HepG2 (cell line): ENCODE measurements at regions of chr11 and their contacts with region 1.

Region 1: DNA sequence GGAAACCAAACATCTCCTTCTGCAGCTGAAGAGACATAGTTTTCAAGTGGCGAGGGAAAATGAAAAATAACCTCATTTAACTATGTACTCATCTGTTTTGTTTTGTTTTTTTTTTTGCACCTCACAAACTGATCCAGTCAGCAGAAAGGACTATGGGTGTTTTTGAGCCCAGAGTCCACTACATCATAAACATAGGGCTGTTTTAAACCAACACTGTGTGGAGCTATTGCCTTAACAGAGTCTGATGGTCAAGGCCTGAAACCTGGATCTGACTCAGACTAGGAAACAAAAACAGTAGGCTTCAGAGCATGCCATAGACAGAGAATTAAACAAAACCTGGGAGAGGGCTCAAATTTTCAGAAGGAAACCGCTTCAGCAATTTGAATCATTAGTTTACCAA is 99.3 kb upstream of the FSHB start:
- DNase-seq: peak; percentile 1
- ATAC-seq: peak; percentile 94
- H3K4me3 ChIP-seq: no peak overlapping the region
- H3K27ac ChIP-seq: no peak overlapping the region
- H3K4me1 ChIP-seq: no peaks in the 10 kb centered on the region
- H3K27me3 ChIP-seq: no peaks in the 10 kb centered on the region; a peak in 1 of 5 replicates
- CTCF ChIP-seq: peak; percentile 51
- EP300 ChIP-seq: no peak
- POLR2A ChIP-seq: no peak
- RAD21 ChIP-seq: no peak

Region 2: DNA sequence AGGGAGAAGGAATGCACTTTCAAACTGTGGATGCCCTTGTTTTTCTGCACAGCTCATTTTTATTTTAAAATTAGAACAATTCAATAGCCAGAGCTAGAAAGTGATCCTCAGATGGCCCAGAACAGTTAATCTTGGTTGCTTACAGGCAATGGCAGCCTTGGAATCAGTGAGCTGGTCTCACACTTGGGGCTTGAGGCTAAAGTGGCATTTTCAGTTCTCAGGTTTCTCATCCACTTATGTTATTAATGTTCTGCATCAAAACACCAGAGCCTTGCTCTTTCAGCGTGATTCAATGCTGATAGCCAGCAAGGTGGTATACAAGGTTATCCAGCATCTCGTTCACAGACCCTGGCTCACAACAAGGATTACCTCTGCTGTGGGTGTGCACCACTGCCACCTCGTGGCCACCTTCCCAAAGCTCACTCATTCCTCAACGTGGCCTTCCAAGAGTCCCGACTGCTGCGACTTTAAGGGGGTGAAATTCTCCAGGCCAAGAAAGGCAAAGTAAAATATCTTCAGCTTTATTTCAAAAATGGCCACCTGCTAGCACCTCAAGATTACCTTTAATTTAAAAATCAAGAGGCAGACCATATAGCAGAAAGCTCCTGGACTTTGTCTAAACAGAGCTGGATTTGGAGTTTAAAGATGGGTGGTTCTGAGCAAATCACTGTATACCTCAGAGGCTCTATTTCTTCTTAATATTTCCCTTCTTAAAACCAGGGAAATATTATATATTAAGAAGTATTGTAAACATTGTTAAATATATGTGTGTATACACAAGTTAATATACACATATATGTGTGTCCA is 65.1 kb after region 1 on chr11:
- CTCF ChIA-PET with region 1: no interaction called
- POLR2A ChIA-PET with region 1: no interaction called
- in situ Hi-C with region 1: loop called (anchors 10 kb)
- intact Hi-C with region 1: no loop called
- DNase-seq: peak; percentile 25
- ATAC-seq: peak; percentile 96
- H3K4me3 ChIP-seq: no peak overlapping the region
- H3K27ac ChIP-seq: no peak overlapping the region
- H3K4me1 ChIP-seq: no peaks in the 10 kb centered on the region
- H3K27me3 ChIP-seq: no peaks in the 10 kb centered on the region
- CTCF ChIP-seq: peak; percentile 82
- EP300 ChIP-seq: no peak
- POLR2A ChIP-seq: no peak
- RAD21 ChIP-seq: 0 out of 2 replicates have a peak, but pooled peaks have one; percentile 12

Region 3: DNA sequence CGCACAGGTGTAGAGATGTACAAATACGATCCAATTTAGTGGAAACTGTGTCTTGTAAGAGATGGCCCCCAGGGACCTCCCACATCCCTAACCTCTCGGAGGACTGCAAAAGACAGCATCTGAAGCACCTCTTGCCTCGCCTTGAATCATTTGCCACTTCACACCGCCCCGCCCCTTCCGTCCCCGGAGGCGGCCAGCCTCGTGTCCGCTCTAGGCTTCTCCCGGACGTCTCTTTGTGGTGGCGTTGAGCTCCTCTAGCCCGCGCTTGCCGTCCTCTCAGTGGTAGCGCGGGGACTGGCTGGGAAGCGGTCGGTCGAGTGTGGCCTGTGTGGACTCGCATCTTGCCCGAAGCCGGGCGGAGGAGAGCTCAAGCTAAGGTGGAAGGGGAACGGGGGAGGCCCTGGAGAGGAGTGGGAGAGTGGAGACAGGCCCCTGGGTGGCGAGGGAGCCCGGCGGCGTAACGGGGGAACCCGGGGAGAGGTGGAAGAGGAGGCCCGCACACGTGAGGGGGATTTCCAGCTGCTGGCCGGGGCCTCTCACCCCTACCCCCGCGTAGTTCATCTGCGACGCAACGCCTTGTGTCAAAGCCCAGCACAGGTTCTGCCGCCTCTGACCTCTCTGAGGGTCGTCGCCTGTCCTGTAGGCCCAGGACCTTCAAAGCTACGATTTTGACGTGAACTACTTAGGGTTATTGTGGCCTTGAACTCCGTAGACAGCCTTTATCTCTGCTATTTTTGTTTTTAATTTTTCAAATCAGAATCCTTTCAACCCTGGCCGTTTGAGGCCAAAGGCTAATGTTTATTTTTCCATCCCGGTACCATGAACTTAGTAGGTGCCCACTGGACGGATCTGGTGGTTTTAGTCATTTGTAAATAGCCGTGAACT is 191.5 kb after region 1 on chr11 and contains the start of gene ARL14EP:
- CTCF ChIA-PET with region 1: no interaction called
- POLR2A ChIA-PET with region 1: no interaction called
- in situ Hi-C with region 1: loop called (anchors 10 kb)
- intact Hi-C with region 1: no loop called
- DNase-seq: peak; percentile 89
- ATAC-seq: peak; percentile 100
- H3K4me3 ChIP-seq: peak within 1 kb of the TSS; percentile 77 to 83 (median 83)
- H3K27ac ChIP-seq: peak within 1 kb of the TSS; percentile 86
- H3K4me1 ChIP-seq: peaks cover 34% of the 10 kb centered on the region
- H3K27me3 ChIP-seq: peaks cover 0 to 9% of the 10 kb centered on the region in 2 experiments; a peak in 1 of 5 replicates
- CTCF ChIP-seq: peak; percentile 23; the same call in 1 of the 2 replicates
- EP300 ChIP-seq: peak in 1 of 2 experiments; percentile 51; a peak in 1 of 4 replicates
- POLR2A ChIP-seq: peak; percentile 87 to 90
- RAD21 ChIP-seq: 0 out of 2 replicates have a peak, but pooled peaks have one; percentile 22
- total RNA-seq, gene ARL14EP: 15.4 and 21.7 TPM in 2 replicates

Region 4: DNA sequence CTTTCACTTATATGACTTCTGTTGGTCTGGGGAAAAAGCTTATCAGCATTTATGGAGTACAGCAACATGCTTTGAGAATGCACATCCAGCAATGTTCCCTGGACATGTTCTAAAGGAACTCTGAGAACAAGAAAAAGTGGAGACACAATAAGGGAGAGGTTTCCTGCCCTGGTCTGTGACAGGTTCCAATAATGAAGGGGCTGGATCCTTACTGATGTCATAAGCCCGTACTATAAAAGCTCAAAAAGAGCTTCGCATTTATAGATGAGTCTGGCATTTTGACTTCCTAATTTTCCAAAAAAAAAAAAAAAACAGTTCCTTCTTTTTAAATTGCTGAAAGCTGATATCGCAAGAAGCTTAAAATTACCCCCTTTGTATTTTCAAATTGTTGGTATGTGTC is 325.6 kb after region 1 on chr11:
- CTCF ChIA-PET with region 1: no interaction called
- POLR2A ChIA-PET with region 1: no interaction called
- in situ Hi-C with region 1: no loop called
- intact Hi-C with region 1: no loop called
- DNase-seq: no peak
- ATAC-seq: no peak
- H3K4me3 ChIP-seq: no peak overlapping the region
- H3K27ac ChIP-seq: no peak overlapping the region
- H3K4me1 ChIP-seq: no peaks in the 10 kb centered on the region
- H3K27me3 ChIP-seq: no peaks in the 10 kb centered on the region
- CTCF ChIP-seq: no peak
- EP300 ChIP-seq: no peak
- POLR2A ChIP-seq: no peak
- RAD21 ChIP-seq: no peak